Ovary (tissue), 10 donors: ENCODE measurements at regions of chr12 and their contacts with region 1.

Region 1: DNA sequence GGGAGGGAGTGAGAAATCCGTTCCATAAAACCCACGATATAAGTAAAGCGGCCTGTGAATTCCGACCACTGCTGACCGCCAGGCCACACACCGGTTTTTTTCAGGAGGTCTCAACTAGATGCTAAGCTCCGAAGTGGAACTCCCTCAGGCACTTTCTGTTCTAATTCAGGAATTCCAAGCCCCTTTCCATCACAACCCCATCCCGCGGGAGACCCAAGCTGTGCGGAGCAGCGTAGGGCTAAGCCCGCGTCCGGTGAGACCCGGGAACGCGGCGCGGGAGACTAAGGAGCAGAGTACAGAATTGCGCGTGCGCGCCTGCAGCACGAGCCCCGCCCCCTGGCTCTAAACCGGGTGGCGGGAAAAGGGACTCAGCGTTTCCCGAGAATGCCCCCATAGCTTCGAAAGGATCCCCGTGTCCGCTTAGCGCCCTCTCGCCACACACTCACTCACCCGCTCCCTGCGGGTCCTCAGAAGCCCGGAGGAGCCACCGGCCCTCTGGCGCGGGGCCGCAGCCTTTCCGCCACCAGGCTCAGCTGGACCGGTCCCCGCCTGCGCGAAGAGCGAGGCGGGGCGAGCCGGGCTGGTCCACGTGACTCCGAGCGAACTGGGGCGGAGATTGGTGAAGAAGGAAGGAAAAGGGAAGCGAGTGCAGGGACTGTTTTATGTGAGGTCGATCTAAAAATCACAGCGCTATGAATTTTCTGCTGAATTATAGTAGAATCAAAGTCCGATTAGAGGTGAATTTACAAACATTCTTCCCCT is at the start of gene TIMELESS:
- DNase-seq: peak; percentile 84 to 90 (median 86)
- H3K4me3 ChIP-seq: peak within 1 kb of the TSS; percentile 66
- H3K27ac ChIP-seq: peak within 1 kb of the TSS; percentile 79 to 81
- H3K4me1 ChIP-seq: no peaks in the 10 kb centered on the region
- H3K27me3 ChIP-seq: no peaks in the 10 kb centered on the region
- CTCF ChIP-seq: peak in 2 of 3 donors; percentile 27 to 47
- EP300 ChIP-seq: no peak
- POLR2A ChIP-seq: peak; percentile 70
- total RNA-seq, gene TIMELESS: 2.1 to 4.5 (median 3.2) TPM

Region 2: GRCh38 chr12:56230432-56231183 is 218.4 kb before region 1 on chr12:
- intact Hi-C with region 1: no loop called
- DNase-seq: no peak
- H3K4me3 ChIP-seq: no peak overlapping the region
- H3K27ac ChIP-seq: no peak overlapping the region
- H3K4me1 ChIP-seq: no peaks in the 10 kb centered on the region
- H3K27me3 ChIP-seq: no peaks in the 10 kb centered on the region
- CTCF ChIP-seq: no peak
- EP300 ChIP-seq: no peak
- POLR2A ChIP-seq: no peak

Region 3: GRCh38 chr12:56359851-56360767 is 88.9 kb before region 1 on chr12 and contains the start of gene STAT2:
- intact Hi-C with region 1: loop called in 1 of 4 experiments (anchors 10 kb)
- DNase-seq: peak; percentile 98 to 99 (median 98)
- H3K4me3 ChIP-seq: peak within 1 kb of the TSS; percentile 83
- H3K27ac ChIP-seq: peak within 1 kb of the TSS; percentile 32 to 83
- H3K4me1 ChIP-seq: peaks cover 6% of the 10 kb centered on the region
- H3K27me3 ChIP-seq: no peaks in the 10 kb centered on the region
- CTCF ChIP-seq: no peak
- EP300 ChIP-seq: peak; percentile 76
- POLR2A ChIP-seq: peak; percentile 33
- total RNA-seq, gene STAT2: 81.5 to 161 (median 90.2) TPM

Region 4: GRCh38 chr12:56377310-56377988 is 71.6 kb before region 1 on chr12:
- intact Hi-C with region 1: loop called in 1 of 4 experiments (anchors 10 kb)
- DNase-seq: no peak
- H3K4me3 ChIP-seq: no peak overlapping the region
- H3K27ac ChIP-seq: no peak overlapping the region
- H3K4me1 ChIP-seq: no peaks in the 10 kb centered on the region
- H3K27me3 ChIP-seq: no peaks in the 10 kb centered on the region
- CTCF ChIP-seq: no peak
- EP300 ChIP-seq: no peak
- POLR2A ChIP-seq: no peak

Region 5: GRCh38 chr12:56420411-56420810 is 28.6 kb before region 1 on chr12:
- intact Hi-C with region 1: no loop called
- DNase-seq: no peak
- H3K4me3 ChIP-seq: no peak overlapping the region
- H3K27ac ChIP-seq: no peak overlapping the region
- H3K4me1 ChIP-seq: no peaks in the 10 kb centered on the region
- H3K27me3 ChIP-seq: no peaks in the 10 kb centered on the region
- CTCF ChIP-seq: no peak
- EP300 ChIP-seq: no peak
- POLR2A ChIP-seq: no peak